Ascending aorta (tissue), 2 donors: ENCODE measurements at regions of chr16 and their contacts with region 1.

Region 1: DNA sequence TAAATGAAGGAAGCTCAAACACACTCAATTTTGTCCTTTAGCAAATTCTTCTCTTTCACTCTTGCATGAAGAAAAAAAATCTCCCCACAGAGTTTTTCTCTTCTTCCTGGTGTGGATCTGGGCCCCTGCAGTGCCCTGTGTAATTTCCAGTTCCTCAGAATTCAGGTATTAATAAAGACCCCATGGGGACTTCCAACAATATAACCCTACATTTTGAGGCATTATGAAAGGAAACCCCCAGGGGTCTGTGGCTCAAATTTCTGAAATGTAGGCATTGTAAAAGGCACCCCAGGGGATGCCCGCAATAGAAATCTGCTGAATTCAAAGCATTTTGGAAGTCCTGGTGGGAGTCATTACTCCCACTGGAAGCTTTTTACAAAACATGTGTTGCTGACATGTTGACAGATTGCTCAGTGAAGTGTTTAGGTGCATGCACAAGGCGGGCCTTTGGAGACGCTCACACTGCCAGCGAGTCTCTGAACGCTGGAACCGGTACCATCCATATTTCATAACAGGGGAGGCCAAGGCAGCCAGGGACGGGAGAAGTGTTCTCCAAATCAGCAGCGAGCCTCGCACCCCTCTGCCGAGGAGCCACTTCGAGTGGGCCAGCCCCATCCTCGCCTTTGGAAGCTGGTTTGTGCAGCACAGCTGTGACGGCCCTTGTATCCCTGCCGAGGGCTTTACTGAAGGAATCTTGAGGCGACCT is 154.0 kb downstream of the ZNF423 start:
- DNase-seq: peak; percentile 18 to 80
- H3K4me3 ChIP-seq: peak overlapping the region in 1 of 2 donors; percentile 39
- H3K27ac ChIP-seq: peak overlapping the region; percentile 88 to 89
- H3K4me1 ChIP-seq: peaks cover 7 to 25% of the 10 kb centered on the region in 2 donors
- H3K27me3 ChIP-seq: no peaks in the 10 kb centered on the region
- CTCF ChIP-seq: no peak

Region 2: DNA sequence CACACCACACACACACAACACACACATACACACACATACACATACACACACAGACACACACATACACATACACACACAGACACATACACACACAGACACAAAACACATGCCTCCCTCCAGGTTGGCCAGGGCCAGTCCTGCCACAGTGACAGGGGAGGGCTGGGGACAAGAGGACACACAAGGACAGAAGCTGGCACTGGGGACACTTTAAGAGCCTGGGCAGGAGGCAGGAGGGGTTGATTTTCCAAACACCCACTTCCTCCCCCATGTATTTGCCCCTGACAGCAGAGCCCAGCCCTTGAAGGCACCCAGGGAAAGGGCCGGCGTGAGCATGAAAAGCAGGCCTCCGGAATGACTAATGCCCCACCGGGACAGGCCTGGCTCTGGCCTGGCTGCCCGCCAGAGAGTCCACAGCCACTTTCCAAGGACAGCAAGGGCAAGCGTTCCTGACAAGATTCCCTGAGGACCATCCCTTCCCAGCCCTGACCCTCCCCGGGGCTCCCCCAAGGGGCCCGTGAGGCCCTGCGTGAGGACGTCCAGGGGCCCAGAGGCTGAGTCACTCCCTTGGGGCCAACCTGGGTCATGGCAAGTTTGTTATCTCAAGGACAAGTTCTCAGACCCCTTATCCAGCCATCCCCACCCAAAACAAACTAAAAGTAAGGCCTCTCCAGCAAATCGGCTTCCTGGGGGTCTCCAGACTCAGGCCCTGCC is 81.6 kb before region 1 on chr16:
- intact Hi-C with region 1: loop called (anchors 2 kb)
- DNase-seq: peak; percentile 69 to 95
- H3K4me3 ChIP-seq: no peak overlapping the region
- H3K27ac ChIP-seq: peak overlapping the region; percentile 81 to 89
- H3K4me1 ChIP-seq: peaks cover 7 to 26% of the 10 kb centered on the region in 2 donors
- H3K27me3 ChIP-seq: no peaks in the 10 kb centered on the region
- CTCF ChIP-seq: no peak

Region 3: DNA sequence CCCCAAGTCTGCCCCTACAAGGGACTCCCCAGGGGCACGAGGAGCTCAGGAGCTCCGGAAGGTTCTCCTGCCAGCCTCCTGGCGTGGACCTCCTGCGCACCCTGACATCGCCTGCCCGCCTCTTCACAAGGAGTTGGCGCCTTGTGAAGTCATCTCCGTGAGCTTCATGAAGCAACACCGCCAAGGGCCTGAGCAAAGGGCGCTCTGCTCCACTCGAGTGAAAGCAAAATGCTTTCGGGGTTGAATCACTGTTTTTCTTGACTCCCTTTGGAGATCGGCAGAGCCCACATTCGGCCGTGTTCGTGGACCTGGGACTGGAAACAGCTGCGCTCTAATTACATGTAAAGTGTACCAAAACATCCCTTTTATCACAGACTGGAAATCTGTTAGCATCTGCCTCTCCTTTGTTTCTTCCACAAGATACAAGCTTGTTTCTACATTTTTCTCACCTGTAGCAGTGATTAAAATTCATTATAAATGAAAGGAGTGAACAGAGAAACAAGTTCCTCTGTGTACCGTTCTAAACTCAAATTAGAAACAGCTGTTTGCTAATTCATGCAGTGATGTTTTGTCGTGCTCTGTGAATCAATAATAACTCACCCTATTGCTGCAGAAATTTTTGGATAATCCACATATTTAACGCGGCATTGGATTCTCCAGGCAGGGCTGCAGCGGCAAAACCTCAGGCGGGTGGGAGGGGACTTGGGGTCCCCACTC is 49.3 kb before region 1 on chr16:
- intact Hi-C with region 1: loop called (anchors 5 kb)
- DNase-seq: peak in 1 of 2 donors; percentile 82
- H3K4me3 ChIP-seq: peak overlapping the region in 1 of 2 donors; percentile 47
- H3K27ac ChIP-seq: peak overlapping the region; percentile 66 to 70
- H3K4me1 ChIP-seq: peaks cover 2 to 8% of the 10 kb centered on the region in 2 donors
- H3K27me3 ChIP-seq: no peaks in the 10 kb centered on the region
- CTCF ChIP-seq: no peak

Region 4: GRCh38 chr16:49755313-49755620 is 53.3 kb after region 1 on chr16:
- intact Hi-C with region 1: loop called (anchors 2 kb)
- DNase-seq: no peak
- H3K4me3 ChIP-seq: peak overlapping the region; percentile 38 to 66
- H3K27ac ChIP-seq: no peak overlapping the region
- H3K4me1 ChIP-seq: peaks cover 0 to 5% of the 10 kb centered on the region in 2 donors
- H3K27me3 ChIP-seq: no peaks in the 10 kb centered on the region
- CTCF ChIP-seq: peak; percentile 12 to 66 (median 45)

Region 5: DNA sequence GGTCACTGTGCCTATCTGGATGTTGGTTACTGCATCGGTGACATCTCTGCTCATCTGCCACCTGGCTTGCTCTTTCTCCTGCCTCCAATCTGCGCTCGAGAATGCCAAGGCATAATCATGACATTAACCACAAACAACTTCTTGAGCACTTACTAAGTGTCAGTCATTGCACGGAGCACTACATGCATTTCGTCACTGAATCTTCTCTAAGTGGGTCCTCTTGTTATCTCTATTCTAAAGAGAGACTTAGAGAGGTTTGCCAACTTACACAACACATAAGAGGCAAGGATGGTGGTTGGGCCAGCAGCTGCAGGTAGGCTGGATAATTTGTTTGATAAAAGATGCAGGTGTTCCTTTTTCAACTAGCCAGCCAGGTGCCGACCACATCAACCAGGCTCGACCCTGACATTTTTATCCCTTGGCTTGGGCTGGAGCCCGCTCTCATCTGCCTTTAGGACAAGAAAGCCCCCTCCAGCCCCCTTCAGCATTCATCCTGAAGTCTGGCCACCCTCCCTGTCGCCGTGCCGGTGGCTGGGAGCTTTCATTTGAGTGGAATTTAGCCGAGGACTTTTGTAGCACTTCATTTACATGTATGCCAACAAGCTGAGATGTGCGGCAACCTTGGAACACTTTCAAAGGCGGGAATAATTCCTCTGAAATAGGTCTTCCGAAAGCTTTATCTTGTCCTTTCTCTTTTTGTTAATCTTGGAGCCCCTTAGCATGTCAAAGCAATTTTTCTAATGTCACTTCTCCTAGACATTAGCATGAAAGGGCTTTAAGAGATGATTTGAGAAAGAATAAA is 757.0 kb after region 1 on chr16:
- intact Hi-C with region 1: no loop called
- DNase-seq: no peak
- H3K4me3 ChIP-seq: no peak overlapping the region
- H3K27ac ChIP-seq: no peak overlapping the region
- H3K4me1 ChIP-seq: no peaks in the 10 kb centered on the region
- H3K27me3 ChIP-seq: no peaks in the 10 kb centered on the region
- CTCF ChIP-seq: no peak